CD8-positive, alpha-beta T cell (primary cell): ENCODE measurements at regions of chr3 and their contacts with region 1.

Region 1: DNA sequence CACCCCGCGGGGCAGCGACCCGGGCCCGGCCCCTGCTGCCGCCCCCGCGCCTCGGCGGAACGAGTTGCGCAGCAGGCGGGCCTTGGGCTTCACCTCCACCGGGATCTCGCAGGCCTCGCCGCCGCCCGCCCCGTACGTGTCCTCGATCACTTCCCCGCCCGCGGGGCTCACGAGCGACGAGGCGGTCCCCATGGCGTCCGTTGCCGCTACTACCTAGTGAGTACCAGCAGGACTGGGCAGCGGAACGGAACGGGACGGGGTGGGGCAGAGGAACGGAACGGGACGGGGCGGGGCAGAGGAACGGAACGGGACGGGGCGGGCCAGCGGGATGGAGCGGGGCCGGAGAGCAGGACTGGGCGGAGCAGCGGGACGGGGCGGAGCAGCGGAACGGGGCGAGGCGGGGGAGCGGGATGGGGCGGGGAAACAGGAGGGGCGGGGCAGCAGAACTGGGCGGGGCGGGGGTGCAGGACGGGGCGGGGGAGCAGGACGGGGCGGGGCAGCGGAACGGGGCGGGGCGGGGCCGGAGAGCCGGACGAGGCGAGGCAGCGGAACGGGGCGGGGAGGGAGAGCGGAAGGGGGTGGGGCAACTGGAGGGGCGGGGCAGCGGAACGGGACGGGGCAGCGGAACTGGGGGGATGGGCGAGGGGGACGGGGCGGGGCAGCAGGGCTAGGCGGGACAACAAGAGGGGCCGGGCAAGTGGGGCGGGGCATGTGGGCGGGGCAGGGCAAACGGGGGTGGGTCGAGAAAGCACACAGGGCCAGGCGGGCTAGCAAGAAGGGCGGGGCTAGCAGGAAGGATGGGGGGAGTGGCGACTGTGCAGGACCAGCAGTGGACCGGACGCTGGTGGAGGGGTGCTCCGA is at the start of gene NPHP3:
- DNase-seq: peak; percentile 95 to 98 (median 97)
- ATAC-seq: peak; percentile 76
- H3K4me3 ChIP-seq: peak within 1 kb of the TSS; percentile 88 to 92
- H3K4me3 Mint-ChIP-seq: peak within 1 kb of the TSS; percentile 91
- H3K27ac ChIP-seq: peak within 1 kb of the TSS; percentile 59 to 67
- H3K27ac Mint-ChIP-seq: peak within 1 kb of the TSS; percentile 88
- H3K4me1 ChIP-seq: peaks cover 25% of the 10 kb centered on the region
- H3K4me1 Mint-ChIP-seq: peaks cover 42% of the 10 kb centered on the region
- H3K27me3 ChIP-seq: no peaks in the 10 kb centered on the region
- H3K27me3 Mint-ChIP-seq: no peaks in the 10 kb centered on the region
- CTCF ChIP-seq: no peak
- total RNA-seq, gene NPHP3: 21.9 to 24.6 TPM

Region 2: GRCh38 chr3:130746246-130747039 is 1976.0 kb before region 1 on chr3 and contains the start of gene PIK3R4:
- CTCF ChIA-PET with region 1: no interaction called
- POLR2A ChIA-PET with region 1: no interaction called
- intact Hi-C with region 1: loop called (anchors 5 to 10 kb)
- DNase-seq: peak; percentile 85 to 99 (median 94)
- ATAC-seq: peak; percentile 80
- H3K4me3 ChIP-seq: peak within 1 kb of the TSS; percentile 75 to 95
- H3K4me3 Mint-ChIP-seq: peak within 1 kb of the TSS; percentile 87
- H3K27ac ChIP-seq: peak within 1 kb of the TSS; percentile 89 to 94
- H3K27ac Mint-ChIP-seq: peak within 1 kb of the TSS; percentile 92
- H3K4me1 ChIP-seq: peaks cover 35% of the 10 kb centered on the region
- H3K4me1 Mint-ChIP-seq: peaks cover 52% of the 10 kb centered on the region
- H3K27me3 ChIP-seq: no peaks in the 10 kb centered on the region
- H3K27me3 Mint-ChIP-seq: no peaks in the 10 kb centered on the region
- CTCF ChIP-seq: no peak
- total RNA-seq, gene PIK3R4: 12.1 to 14.8 TPM

Region 3: DNA sequence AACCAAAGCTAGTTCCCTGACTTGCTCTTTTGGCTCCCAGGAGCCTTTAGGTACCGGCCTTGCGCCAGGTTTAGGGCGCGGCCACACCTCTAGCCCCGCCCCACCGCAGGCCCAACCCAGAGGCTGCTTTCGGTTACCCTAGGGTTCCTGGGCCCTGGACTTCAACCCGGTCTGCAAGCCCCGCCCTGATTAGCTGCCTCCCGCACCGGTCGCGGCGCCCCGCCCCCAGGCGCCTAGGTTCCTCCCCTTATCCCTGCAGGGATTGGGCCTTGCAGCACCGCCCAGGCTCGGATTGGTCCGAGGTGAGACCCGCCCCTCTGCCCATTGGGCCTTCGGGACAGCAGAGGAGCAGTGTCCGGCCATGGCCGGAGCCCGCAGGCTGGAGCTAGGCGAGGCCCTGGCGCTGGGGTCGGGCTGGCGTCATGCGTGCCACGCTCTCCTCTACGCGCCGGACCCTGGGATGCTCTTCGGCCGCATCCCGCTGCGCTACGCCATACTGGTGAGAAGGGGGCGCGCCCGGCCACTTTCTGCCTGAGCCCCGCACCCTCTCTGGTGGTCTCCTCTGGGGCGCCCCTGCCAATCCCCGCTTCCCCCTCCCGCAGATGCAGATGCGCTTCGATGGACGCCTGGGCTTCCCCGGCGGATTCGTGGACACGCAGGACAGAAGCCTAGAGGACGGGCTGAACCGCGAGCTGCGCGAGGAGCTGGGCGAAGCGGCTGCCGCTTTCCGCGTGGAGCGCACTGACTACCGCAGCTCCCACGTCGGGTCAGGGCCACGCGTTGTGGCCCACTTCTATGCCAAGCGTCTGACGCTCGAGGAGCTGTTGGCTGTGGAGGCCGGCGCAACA is 1340.7 kb before region 1 on chr3 and contains the start of gene NUDT16:
- CTCF ChIA-PET with region 1: no interaction called
- POLR2A ChIA-PET with region 1: no interaction called
- intact Hi-C with region 1: loop called in 1 of 2 experiments (anchors 5 kb)
- DNase-seq: peak; percentile 92 to 97 (median 95)
- ATAC-seq: peak; percentile 96
- H3K4me3 ChIP-seq: peak within 1 kb of the TSS; percentile 86 to 94
- H3K4me3 Mint-ChIP-seq: peak within 1 kb of the TSS; percentile 96
- H3K27ac ChIP-seq: peak within 1 kb of the TSS; percentile 45 to 64
- H3K27ac Mint-ChIP-seq: peak within 1 kb of the TSS; percentile 91
- H3K4me1 ChIP-seq: peaks cover 13% of the 10 kb centered on the region
- H3K4me1 Mint-ChIP-seq: peaks cover 31% of the 10 kb centered on the region
- H3K27me3 ChIP-seq: no peaks in the 10 kb centered on the region
- H3K27me3 Mint-ChIP-seq: no peaks in the 10 kb centered on the region
- CTCF ChIP-seq: no peak
- total RNA-seq, gene NUDT16: 3.1 to 3.5 TPM

Region 4: DNA sequence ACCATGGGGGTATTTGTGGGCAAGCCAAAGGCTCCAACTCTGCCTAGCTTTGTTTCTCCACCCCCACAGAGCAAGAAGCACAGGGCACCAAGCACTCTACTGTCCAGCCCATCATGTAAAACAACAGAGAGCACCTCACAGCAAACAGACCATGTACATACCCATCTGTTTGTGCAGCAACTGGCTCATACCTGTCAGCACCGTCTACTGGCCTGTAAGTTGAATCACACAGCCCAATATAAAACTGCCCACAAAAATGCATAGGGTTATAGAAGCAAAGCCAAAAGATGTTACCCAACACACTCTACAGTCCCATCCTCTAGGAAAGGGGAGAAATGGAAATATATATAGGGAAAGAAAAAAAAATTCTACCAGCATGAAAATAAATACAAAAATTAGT is 547.9 kb before region 1 on chr3:
- CTCF ChIA-PET with region 1: no interaction called
- POLR2A ChIA-PET with region 1: no interaction called
- intact Hi-C with region 1: no loop called
- DNase-seq: no peak
- ATAC-seq: no peak
- H3K4me3 ChIP-seq: no peak overlapping the region
- H3K4me3 Mint-ChIP-seq: no peak overlapping the region
- H3K27ac ChIP-seq: no peak overlapping the region
- H3K27ac Mint-ChIP-seq: no peak overlapping the region
- H3K4me1 ChIP-seq: no peaks in the 10 kb centered on the region
- H3K4me1 Mint-ChIP-seq: no peaks in the 10 kb centered on the region
- H3K27me3 ChIP-seq: no peaks in the 10 kb centered on the region
- H3K27me3 Mint-ChIP-seq: peaks cover 4% of the 10 kb centered on the region
- CTCF ChIP-seq: no peak

Region 5: GRCh38 chr3:132659365-132660051 is 62.9 kb before region 1 on chr3 and contains the start of gene ACAD11:
- CTCF ChIA-PET with region 1: interaction called, 3 read pairs
- POLR2A ChIA-PET with region 1: interaction called, 3 read pairs
- intact Hi-C with region 1: loop called (anchors 1 to 2 kb)
- DNase-seq: peak in 8 of 9 experiments; percentile 2 to 68 (median 29)
- ATAC-seq: peak; percentile 26
- H3K4me3 ChIP-seq: peak within 1 kb of the TSS; percentile 80 to 94
- H3K4me3 Mint-ChIP-seq: peak within 1 kb of the TSS; percentile 96
- H3K27ac ChIP-seq: peak within 1 kb of the TSS; percentile 83 to 89
- H3K27ac Mint-ChIP-seq: peak within 1 kb of the TSS; percentile 98
- H3K4me1 ChIP-seq: peaks cover 35% of the 10 kb centered on the region
- H3K4me1 Mint-ChIP-seq: peaks cover 69% of the 10 kb centered on the region
- H3K27me3 ChIP-seq: no peaks in the 10 kb centered on the region
- H3K27me3 Mint-ChIP-seq: no peaks in the 10 kb centered on the region
- CTCF ChIP-seq: peak; percentile 8
- total RNA-seq, gene ACAD11: 30.0 to 31.6 TPM

Region 6: GRCh38 chr3:133487920-133488540 is 765.6 kb after region 1 on chr3:
- CTCF ChIA-PET with region 1: interaction called, 10 read pairs
- POLR2A ChIA-PET with region 1: no interaction called
- intact Hi-C with region 1: loop called (anchors 5 kb)
- DNase-seq: peak in 8 of 9 experiments; percentile 45 to 79 (median 71)
- ATAC-seq: no peak
- H3K4me3 ChIP-seq: no peak overlapping the region
- H3K4me3 Mint-ChIP-seq: no peak overlapping the region
- H3K27ac ChIP-seq: no peak overlapping the region
- H3K27ac Mint-ChIP-seq: peak overlapping the region; percentile 96
- H3K4me1 ChIP-seq: peaks cover 50% of the 10 kb centered on the region
- H3K4me1 Mint-ChIP-seq: peaks cover 59% of the 10 kb centered on the region
- H3K27me3 ChIP-seq: no peaks in the 10 kb centered on the region
- H3K27me3 Mint-ChIP-seq: no peaks in the 10 kb centered on the region
- CTCF ChIP-seq: peak; percentile 88

Region 7: DNA sequence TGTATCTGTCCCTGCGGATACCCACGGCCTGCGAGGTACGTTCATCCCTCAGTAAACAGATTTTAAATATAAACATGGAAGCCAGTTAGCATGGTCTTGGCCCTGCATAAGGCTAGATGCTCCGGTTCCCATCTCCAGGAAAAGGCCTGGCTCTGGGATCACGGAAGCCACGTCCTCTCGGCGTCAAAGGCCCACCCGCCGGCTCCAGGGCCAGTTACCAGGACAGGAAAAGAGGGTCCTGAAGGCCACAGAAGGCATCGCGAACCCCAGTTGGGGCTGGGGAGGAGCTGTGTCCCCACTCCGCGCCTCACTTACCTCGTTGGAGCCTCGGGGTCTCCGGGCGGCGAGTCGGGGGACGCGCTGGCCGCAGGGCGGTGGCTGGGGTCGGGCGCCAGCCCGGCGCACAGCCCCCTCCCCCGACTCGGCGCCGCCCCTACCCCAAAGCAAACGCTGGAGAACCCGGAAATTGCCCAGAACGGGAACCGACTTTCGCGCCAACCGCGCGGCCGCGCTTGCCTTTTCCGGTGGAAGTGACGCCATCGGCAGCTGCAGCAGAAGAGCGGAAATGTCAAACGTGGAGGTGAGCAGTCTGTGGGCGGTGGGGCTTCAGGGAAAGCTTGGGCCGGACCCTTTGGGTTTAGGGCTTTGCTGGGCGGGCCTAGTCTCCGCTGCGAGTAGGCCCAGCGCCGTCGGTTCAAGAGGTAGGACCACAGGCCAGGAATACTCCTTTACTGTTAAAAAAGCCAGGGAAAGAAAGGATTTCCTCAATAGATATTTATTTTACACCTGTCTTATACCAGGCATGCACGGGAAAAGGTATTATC is 939.3 kb after region 1 on chr3 and contains the start of gene TOPBP1:
- CTCF ChIA-PET with region 1: no interaction called
- POLR2A ChIA-PET with region 1: no interaction called
- intact Hi-C with region 1: loop called (anchors 1 to 2 kb)
- DNase-seq: peak; percentile 58 to 92 (median 87)
- ATAC-seq: peak; percentile 82
- H3K4me3 ChIP-seq: peak within 1 kb of the TSS; percentile 86 to 90
- H3K4me3 Mint-ChIP-seq: peak within 1 kb of the TSS; percentile 98
- H3K27ac ChIP-seq: peak within 1 kb of the TSS; percentile 83 to 85
- H3K27ac Mint-ChIP-seq: peak within 1 kb of the TSS; percentile 98
- H3K4me1 ChIP-seq: peaks cover 26% of the 10 kb centered on the region
- H3K4me1 Mint-ChIP-seq: peaks cover 45% of the 10 kb centered on the region
- H3K27me3 ChIP-seq: no peaks in the 10 kb centered on the region
- H3K27me3 Mint-ChIP-seq: no peaks in the 10 kb centered on the region
- CTCF ChIP-seq: no peak
- total RNA-seq, gene TOPBP1: 32.4 to 33.9 TPM

Region 8: GRCh38 chr3:134212906-134213665 is 1490.7 kb after region 1 on chr3:
- CTCF ChIA-PET with region 1: no interaction called
- POLR2A ChIA-PET with region 1: no interaction called
- intact Hi-C with region 1: loop called in 1 of 2 experiments (anchors 10 kb)
- DNase-seq: peak; percentile 71 to 95 (median 83)
- ATAC-seq: peak; percentile 91
- H3K4me3 ChIP-seq: no peak overlapping the region
- H3K4me3 Mint-ChIP-seq: no peak overlapping the region
- H3K27ac ChIP-seq: no peak overlapping the region
- H3K27ac Mint-ChIP-seq: no peak overlapping the region
- H3K4me1 ChIP-seq: no peaks in the 10 kb centered on the region
- H3K4me1 Mint-ChIP-seq: peaks cover 38% of the 10 kb centered on the region
- H3K27me3 ChIP-seq: no peaks in the 10 kb centered on the region
- H3K27me3 Mint-ChIP-seq: no peaks in the 10 kb centered on the region
- CTCF ChIP-seq: peak; percentile 93